Posterior vena cava (tissue), 2 donors: ENCODE measurements at regions of chr20 and their contacts with region 1.

Region 1: DNA sequence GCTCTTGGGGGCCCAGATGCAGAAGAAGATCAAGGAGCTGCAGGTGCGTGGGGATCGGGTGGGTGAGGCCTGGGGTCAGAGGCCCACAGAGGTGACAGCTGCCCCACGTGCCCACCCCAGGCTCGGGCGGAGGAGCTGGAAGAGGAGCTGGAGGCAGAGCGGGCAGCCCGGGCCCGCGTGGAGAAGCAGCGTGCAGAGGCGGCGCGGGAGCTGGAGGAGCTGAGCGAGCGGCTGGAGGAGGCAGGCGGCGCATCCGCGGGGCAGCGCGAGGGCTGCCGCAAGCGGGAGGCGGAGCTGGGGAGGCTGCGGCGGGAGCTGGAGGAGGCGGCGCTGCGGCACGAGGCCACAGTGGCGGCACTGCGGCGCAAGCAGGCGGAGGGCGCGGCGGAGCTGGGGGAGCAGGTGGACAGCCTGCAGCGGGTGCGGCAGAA is 41.5 kb downstream of the MYH7B start:
- DNase-seq: no peak

Region 2: GRCh38 chr20:35079472-35080347 is 82.6 kb after region 1 on chr20:
- intact Hi-C with region 1: no loop called
- DNase-seq: no peak

Region 3: DNA sequence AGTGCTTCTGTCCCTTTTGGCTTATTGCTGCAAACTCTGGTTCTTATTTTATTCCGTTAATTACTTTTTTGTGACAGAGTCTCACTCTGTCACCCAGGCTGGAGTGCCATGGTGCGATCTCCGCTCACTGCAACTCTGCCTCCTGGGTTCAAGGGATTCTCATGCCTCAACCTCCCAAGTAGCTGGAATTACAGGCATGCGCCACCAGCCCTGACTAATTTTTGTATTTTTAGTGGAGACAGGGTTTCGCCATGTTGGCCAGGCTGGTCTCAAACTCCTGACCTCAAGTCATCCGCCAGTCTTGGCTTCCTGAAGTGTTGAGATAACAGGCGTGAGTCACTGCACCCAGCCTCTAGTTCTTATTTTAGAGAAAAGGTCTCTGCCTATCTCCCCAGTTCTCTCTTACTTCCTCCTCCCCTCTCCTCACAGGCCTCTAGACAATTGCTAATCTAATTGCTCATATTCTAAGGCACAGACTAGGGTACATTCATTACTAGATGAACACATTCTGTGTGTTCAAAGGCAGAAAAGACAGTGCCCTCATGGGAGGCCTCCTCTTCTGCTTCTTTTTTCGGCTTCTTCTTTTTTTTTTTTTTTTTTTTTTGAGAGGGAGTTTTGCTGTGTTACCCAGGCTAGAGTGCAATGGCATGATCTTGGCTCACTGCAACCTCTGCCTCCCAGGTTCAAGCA is 123.0 kb after region 1 on chr20:
- intact Hi-C with region 1: no loop called
- DNase-seq: peak; percentile 90

Region 4: DNA sequence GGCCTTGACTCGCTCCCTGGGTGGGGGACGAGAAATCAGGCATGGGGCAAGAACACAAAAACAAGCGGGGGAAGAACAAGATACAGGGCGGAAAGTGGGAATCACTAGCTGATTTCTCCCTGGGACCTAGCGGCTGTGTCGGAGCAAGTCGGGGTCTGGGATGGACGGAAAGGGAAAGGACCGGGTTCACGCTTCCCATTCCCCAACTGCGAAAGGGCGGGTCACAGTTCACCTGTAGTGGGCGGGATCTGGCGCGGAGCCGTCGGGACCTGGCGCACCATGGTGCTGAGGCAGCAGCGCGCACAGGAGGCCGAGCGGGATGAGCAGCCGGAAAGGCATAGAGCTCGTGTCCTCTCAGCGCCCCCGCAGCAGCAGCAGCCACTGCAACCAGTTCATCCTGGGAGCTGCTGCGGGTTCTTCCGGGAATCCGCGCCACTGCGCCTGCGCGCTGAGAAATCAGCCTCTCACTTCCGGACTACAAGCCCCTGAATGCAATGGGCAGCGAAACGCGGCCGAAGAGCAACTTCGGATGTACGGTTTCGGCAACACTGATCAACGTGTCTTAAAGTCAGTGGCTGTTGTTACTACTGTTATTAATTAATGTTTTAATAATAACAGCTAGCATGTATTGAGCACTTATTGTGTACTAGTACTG is 149.9 kb after region 1 on chr20 and contains the start of gene EDEM2:
- intact Hi-C with region 1: no loop called
- DNase-seq: peak; percentile 99
- total RNA-seq, gene EDEM2: 27.9 to 30.6 TPM

Region 5: DNA sequence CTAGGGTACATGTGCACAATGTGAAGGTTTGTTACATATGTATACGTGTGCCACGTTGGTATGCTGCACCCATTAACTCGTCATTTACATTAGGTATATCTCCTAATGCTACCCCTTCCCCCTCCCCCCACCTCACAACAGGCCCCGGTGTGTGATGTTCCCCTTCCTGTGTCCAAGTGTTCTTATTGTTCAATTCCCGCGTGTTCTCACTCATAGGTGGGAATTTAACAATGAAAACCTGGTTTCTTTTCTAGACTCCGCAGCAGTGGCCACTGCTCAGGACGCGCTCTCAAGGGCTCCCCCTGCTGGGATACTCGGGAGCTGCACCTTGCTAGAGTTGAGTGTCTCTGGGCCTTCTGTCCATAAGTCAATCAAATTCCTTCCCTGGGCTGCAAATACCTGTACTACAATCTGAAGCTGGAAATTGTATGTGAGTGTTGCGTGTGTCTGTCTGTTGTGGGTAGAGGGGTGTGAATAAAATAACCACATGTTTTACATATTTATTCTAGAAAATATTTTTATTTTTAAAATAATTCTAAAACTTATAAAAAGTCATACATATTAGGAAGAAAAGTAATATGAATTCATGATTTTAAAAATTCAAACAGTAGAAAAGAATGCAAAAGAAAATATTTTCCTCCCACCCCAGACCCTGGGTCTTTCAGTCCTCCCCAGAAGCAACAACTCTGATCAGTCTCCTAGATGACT is 450.1 kb after region 1 on chr20:
- intact Hi-C with region 1: no loop called
- DNase-seq: peak; percentile 94

Region 6: DNA sequence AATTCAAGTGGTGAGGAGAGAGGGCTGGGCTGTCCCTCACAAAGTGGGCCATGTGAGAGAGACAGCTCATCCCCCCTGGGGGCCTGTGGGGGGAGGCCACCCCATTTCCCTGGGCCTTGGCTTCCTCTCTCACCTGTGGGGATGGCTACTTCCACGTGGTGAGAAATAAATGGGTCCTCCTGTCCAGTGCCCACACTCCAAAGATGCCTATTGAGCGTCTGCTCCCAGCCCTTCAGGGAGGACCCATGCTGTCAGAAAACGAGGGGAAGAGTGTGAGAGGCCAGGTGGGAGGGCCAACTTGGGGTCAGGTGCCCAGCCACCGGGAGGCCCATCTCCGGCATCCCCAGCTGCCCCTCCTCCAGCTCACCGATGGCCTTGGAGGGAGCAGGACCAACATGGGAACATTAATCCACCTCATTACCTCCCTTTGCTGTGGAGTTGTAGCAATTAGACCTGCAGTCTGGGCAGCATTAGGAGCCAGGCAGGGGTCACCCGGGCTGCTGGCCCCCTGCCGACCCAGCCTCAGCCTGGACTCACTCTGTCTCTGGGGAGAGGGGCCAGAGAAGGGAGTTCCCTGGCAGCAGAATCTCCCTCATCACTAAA is 1334.0 kb after region 1 on chr20:
- intact Hi-C with region 1: loop called in 1 of 2 experiments (anchors 5 kb)
- DNase-seq: no peak